OCI-LY7 (cell line): ENCODE measurements at regions of chr7 and their contacts with region 1.

Region 1: GRCh38 chr7:21767300-21767900 is 178.3 kb downstream of the CDCA7L start:
- DNase-seq: peak; percentile 73
- H3K4me3 ChIP-seq: no peak overlapping the region
- H3K27ac ChIP-seq: no peak overlapping the region
- H3K4me1 ChIP-seq: no peaks in the 10 kb centered on the region
- CTCF ChIP-seq: peak; percentile 80

Region 2: GRCh38 chr7:21256310-21256877 is 511.0 kb before region 1 on chr7:
- CTCF ChIA-PET with region 1: no interaction called
- POLR2A ChIA-PET with region 1: no interaction called
- intact Hi-C with region 1: loop called (anchors 2 kb)
- DNase-seq: peak; percentile 45
- H3K4me3 ChIP-seq: no peak overlapping the region
- H3K27ac ChIP-seq: no peak overlapping the region
- H3K4me1 ChIP-seq: no peaks in the 10 kb centered on the region
- CTCF ChIP-seq: peak; percentile 79

Region 3: DNA sequence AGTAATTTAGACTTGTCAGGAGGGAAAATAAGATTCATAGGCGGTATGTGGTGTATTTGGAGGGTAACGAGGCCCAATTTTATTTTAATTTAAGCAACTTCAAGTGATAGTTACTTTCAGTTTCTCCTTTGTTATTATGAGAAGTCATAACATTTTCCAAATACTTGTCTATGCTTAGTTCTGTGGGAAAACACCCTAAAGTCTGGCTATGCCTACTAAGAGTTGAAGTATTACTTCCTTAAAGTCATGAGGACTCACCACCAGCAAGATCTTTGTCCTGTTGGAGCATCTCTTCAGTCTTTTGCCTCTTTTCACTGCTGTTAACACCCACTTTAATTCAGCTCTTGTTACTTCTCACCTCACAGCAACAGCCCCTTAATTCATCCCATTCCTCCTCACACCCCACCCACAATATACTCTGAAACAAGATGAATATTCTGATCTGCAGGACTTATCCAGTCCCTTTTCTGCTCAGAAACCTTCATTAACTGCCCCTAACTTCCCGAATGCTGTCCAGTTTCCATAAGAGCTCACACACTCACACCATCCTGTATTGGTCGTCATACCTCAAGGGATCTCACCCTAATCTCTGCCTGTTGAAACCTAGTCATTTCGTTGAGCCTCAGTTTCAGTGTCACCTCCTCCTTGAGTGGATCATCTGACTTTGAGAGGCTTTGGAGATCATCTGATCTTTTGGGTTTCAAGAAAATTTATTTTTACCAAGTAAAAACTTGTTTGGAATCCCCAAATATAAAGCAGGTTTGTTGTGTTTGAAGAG is 163.2 kb before region 1 on chr7:
- CTCF ChIA-PET with region 1: no interaction called
- POLR2A ChIA-PET with region 1: interaction called, 10 read pairs
- intact Hi-C with region 1: no loop called
- DNase-seq: no peak
- H3K4me3 ChIP-seq: no peak overlapping the region
- H3K27ac ChIP-seq: no peak overlapping the region
- H3K4me1 ChIP-seq: no peaks in the 10 kb centered on the region
- CTCF ChIP-seq: no peak

Region 4: GRCh38 chr7:21778953-21779352 is 11.6 kb after region 1 on chr7:
- CTCF ChIA-PET with region 1: no interaction called
- POLR2A ChIA-PET with region 1: interaction called, 12 read pairs
- intact Hi-C with region 1: no loop called
- DNase-seq: no peak
- H3K4me3 ChIP-seq: no peak overlapping the region
- H3K27ac ChIP-seq: no peak overlapping the region
- H3K4me1 ChIP-seq: no peaks in the 10 kb centered on the region
- CTCF ChIP-seq: no peak